PC-9 (cell line): ENCODE measurements at regions of chr5 and their contacts with region 1.

Region 1: GRCh38 chr5:17216176-17216973 is 1.1 kb upstream of the BASP1 start:
- DNase-seq: peak; percentile 44 to 81
- H3K4me3 ChIP-seq: no peak overlapping the region
- H3K27ac ChIP-seq: no peak overlapping the region
- H3K4me1 ChIP-seq: no peaks in the 10 kb centered on the region
- H3K27me3 ChIP-seq: 0 out of 2 replicates have a peak, but pooled peaks cover 8% of the 10 kb centered on the region
- CTCF ChIP-seq: peak; percentile 90

Region 2: GRCh38 chr5:17204133-17204489 is 12.3 kb before region 1 on chr5:
- CTCF ChIA-PET with region 1: no interaction called
- POLR2A ChIA-PET with region 1: no interaction called
- intact Hi-C with region 1: no loop called
- DNase-seq: no peak
- H3K4me3 ChIP-seq: no peak overlapping the region
- H3K27ac ChIP-seq: no peak overlapping the region
- H3K4me1 ChIP-seq: no peaks in the 10 kb centered on the region
- H3K27me3 ChIP-seq: no peaks in the 10 kb centered on the region
- CTCF ChIP-seq: no peak

Region 3: GRCh38 chr5:18113721-18114120 is 897.3 kb after region 1 on chr5:
- CTCF ChIA-PET with region 1: interaction called, 3 read pairs
- POLR2A ChIA-PET with region 1: no interaction called
- intact Hi-C with region 1: loop called (anchors 5 kb)
- DNase-seq: no peak
- H3K4me3 ChIP-seq: no peak overlapping the region
- H3K27ac ChIP-seq: no peak overlapping the region
- H3K4me1 ChIP-seq: no peaks in the 10 kb centered on the region
- H3K27me3 ChIP-seq: peaks cover 28% of the 10 kb centered on the region; the same call in 1 of the 2 replicates
- CTCF ChIP-seq: peak; percentile 67

Region 4: DNA sequence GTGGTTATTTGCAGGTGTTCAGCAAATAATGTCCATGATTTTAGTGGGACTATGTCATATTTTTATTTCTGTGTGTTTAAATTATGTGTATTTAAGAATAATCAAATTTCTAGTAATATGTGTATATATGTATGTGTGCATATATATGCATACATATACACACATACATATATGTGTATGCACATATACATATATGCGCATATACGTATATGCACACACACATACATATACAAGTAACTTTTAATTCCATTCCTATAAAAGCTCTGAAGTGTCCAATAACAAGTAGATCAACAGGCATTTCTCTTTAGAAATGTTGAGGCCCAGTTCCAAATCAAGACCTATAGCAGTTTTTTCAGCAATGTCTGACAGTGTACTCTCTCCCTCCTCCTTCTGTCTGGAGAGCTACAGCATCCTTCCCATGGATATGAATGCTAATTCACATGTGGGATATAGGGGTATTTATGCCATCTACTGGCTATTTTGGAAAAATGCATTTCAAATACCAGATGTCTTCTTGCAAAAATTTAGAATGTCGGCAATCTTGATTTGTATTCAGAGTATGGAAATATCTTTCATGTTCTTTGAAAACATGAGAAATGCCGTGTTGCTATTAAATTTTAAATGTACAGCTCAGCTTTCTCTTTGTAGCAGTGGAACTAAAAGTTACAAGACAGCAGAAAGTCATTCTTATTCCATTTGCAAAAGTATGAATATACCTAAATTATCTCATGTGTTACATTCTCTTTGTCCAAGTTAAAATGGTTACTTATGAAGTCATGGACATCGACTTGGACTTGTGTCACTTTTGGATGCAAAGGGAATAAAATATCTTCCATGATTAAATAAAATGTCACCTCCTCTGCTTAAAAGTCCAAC is 1065.5 kb after region 1 on chr5:
- CTCF ChIA-PET with region 1: interaction called, 3 read pairs
- POLR2A ChIA-PET with region 1: no interaction called
- intact Hi-C with region 1: loop called (anchors 1 kb)
- DNase-seq: no peak
- H3K4me3 ChIP-seq: no peak overlapping the region
- H3K27ac ChIP-seq: no peak overlapping the region
- H3K4me1 ChIP-seq: no peaks in the 10 kb centered on the region
- H3K27me3 ChIP-seq: peaks cover 11% of the 10 kb centered on the region; the same call in 1 of the 2 replicates
- CTCF ChIP-seq: peak; percentile 73

Region 5: DNA sequence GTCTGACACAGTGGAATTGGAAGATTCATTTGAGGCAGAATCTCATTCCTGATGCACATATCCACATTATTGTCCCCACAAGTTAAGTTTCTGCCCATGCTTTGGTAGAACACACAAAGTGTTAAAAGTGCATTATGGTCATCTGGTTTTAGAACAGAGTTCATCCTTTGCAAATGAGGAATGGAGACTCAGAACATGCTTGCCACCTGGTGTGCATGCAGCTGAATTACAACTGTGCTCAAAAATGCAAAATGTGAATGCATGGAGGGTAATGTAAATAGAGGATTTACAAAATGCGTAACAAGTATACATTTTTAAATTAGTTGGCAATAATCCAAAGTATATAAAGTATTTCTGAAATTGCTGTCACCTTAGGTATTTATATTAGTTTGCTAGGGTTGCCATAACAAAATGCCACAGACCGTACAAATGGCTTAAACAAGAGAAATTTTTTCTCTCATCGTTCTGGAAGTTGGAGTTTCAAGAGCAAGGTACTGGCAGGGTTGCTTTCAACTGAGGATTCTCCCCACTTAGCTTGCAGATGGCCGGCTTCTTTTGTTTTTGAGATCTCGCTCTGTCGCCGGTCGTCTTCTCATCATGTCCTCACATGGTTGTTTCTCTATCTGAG is 1089.0 kb after region 1 on chr5:
- CTCF ChIA-PET with region 1: interaction called, 15 read pairs
- POLR2A ChIA-PET with region 1: no interaction called
- intact Hi-C with region 1: loop called (anchors 1 kb)
- DNase-seq: peak in 1 of 2 experiments; percentile 38
- H3K4me3 ChIP-seq: no peak overlapping the region
- H3K27ac ChIP-seq: no peak overlapping the region
- H3K4me1 ChIP-seq: no peaks in the 10 kb centered on the region
- H3K27me3 ChIP-seq: no peaks in the 10 kb centered on the region
- CTCF ChIP-seq: peak; percentile 89

Region 6: GRCh38 chr5:18314192-18314778 is 1097.9 kb after region 1 on chr5:
- CTCF ChIA-PET with region 1: interaction called, 5 read pairs
- POLR2A ChIA-PET with region 1: no interaction called
- intact Hi-C with region 1: loop called (anchors 1 kb)
- DNase-seq: no peak
- H3K4me3 ChIP-seq: no peak overlapping the region
- H3K27ac ChIP-seq: no peak overlapping the region
- H3K4me1 ChIP-seq: no peaks in the 10 kb centered on the region
- H3K27me3 ChIP-seq: no peaks in the 10 kb centered on the region
- CTCF ChIP-seq: peak; percentile 82

Region 7: GRCh38 chr5:18699681-18700080 is 1483.3 kb after region 1 on chr5:
- CTCF ChIA-PET with region 1: no interaction called
- POLR2A ChIA-PET with region 1: no interaction called
- intact Hi-C with region 1: loop called (anchors 10 kb)
- DNase-seq: no peak
- H3K4me3 ChIP-seq: no peak overlapping the region
- H3K27ac ChIP-seq: no peak overlapping the region
- H3K4me1 ChIP-seq: 0 out of 2 replicates have a peak, but pooled peaks cover 4% of the 10 kb centered on the region
- H3K27me3 ChIP-seq: no peaks in the 10 kb centered on the region
- CTCF ChIP-seq: no peak